ENCODE measurements at regions of chr22 and their contacts with region 1.

Region 1: DNA sequence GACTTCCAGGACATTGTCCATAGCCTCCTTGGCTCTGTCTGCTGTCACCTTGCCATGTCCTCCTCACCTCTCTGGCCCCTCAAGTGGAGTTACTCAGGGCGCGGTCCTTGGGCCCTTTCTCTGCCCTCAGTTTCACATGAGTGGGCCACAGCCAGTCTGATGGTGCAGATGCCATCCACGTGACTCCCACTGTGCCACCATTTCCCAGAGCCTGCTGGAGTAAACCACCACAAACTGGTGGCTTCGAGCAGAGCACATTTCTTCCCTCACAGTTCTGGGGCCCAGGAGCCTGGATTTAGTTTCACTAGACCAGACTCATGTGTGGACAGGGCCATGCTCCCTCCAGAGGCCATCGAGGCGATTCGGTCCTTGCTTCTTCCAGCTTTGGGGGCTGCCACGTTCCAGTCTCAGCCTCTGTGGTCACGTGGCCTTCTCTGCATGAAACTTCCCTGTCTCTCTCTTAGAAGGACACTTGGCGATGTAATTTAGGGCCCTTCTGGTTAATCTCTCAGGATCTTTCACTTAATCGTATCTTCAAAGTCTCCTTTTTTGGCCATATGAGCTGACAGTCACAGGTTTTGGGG is 14.6 kb downstream of the SMARCB1 start:
- DNase-seq: no peak
- ATAC-seq: no peak
- H3K4me3 ChIP-seq: no peak overlapping the region
- H3K27ac ChIP-seq: no peak overlapping the region
- H3K4me1 ChIP-seq: no peaks in the 10 kb centered on the region
- H3K27me3 ChIP-seq: no peaks in the 10 kb centered on the region
- CTCF ChIP-seq: no peak

Region 2: GRCh38 chr22:23857606-23858483 is 56.5 kb after region 1 on chr22 and contains the start of gene SLC2A11:
- CTCF ChIA-PET with region 1: interaction called, 10 read pairs
- POLR2A ChIA-PET with region 1: no interaction called
- in situ Hi-C with region 1: no loop called
- intact Hi-C with region 1: no loop called
- DNase-seq: peak; percentile 82
- ATAC-seq: peak; percentile 95
- H3K4me3 ChIP-seq: peak within 1 kb of the TSS; percentile 74 to 94
- H3K27ac ChIP-seq: peak within 1 kb of the TSS; percentile 86
- H3K4me1 ChIP-seq: peaks cover 7% of the 10 kb centered on the region
- H3K27me3 ChIP-seq: no peaks in the 10 kb centered on the region
- CTCF ChIP-seq: no peak; the same call in 1 of the 2 replicates
- total RNA-seq, gene SLC2A11: 33.8 TPM

Measured in Panc1 (cell line).